ENCODE measurements at regions of chr3 and their contacts with region 1.

Region 1: GRCh38 chr3:112948346-112948838 is 26.5 kb downstream of the CD200R1 start:
- DNase-seq: no peak
- ATAC-seq: no peak
- H3K4me3 ChIP-seq: no peak overlapping the region
- H3K4me3 Mint-ChIP-seq: no peak overlapping the region
- H3K27ac ChIP-seq: no peak overlapping the region
- H3K27ac Mint-ChIP-seq: peak overlapping the region; percentile 34
- H3K4me1 ChIP-seq: no peaks in the 10 kb centered on the region
- H3K4me1 Mint-ChIP-seq: peaks cover 22% of the 10 kb centered on the region
- H3K27me3 ChIP-seq: no peaks in the 10 kb centered on the region
- H3K27me3 Mint-ChIP-seq: no peaks in the 10 kb centered on the region
- CTCF ChIP-seq: no peak

Region 2: GRCh38 chr3:112799946-112800345 is 148.4 kb before region 1 on chr3:
- CTCF ChIA-PET with region 1: no interaction called
- POLR2A ChIA-PET with region 1: no interaction called
- intact Hi-C with region 1: no loop called
- DNase-seq: no peak
- ATAC-seq: no peak
- H3K4me3 ChIP-seq: no peak overlapping the region
- H3K4me3 Mint-ChIP-seq: no peak overlapping the region
- H3K27ac ChIP-seq: no peak overlapping the region
- H3K27ac Mint-ChIP-seq: no peak overlapping the region
- H3K4me1 ChIP-seq: peaks cover 5% of the 10 kb centered on the region
- H3K4me1 Mint-ChIP-seq: peaks cover 47% of the 10 kb centered on the region
- H3K27me3 ChIP-seq: no peaks in the 10 kb centered on the region
- H3K27me3 Mint-ChIP-seq: no peaks in the 10 kb centered on the region
- CTCF ChIP-seq: no peak

Region 3: GRCh38 chr3:112979240-112979832 is 30.9 kb after region 1 on chr3:
- CTCF ChIA-PET with region 1: no interaction called
- POLR2A ChIA-PET with region 1: interaction called, 3 read pairs
- intact Hi-C with region 1: loop called in 1 of 2 experiments (anchors 5 kb)
- DNase-seq: peak in 4 of 14 experiments; percentile 39 to 77 (median 72)
- ATAC-seq: no peak
- H3K4me3 ChIP-seq: no peak overlapping the region
- H3K4me3 Mint-ChIP-seq: peak overlapping the region; percentile 1
- H3K27ac ChIP-seq: no peak overlapping the region
- H3K27ac Mint-ChIP-seq: peak overlapping the region; percentile 6
- H3K4me1 ChIP-seq: peaks cover 36% of the 10 kb centered on the region
- H3K4me1 Mint-ChIP-seq: peaks cover 73% of the 10 kb centered on the region
- H3K27me3 ChIP-seq: no peaks in the 10 kb centered on the region
- H3K27me3 Mint-ChIP-seq: no peaks in the 10 kb centered on the region
- CTCF ChIP-seq: peak; percentile 94

Measured in CD4-positive, alpha-beta T cell (primary cell).